ENCODE measurements at regions of chr1 and their contacts with region 1.

Region 1: DNA sequence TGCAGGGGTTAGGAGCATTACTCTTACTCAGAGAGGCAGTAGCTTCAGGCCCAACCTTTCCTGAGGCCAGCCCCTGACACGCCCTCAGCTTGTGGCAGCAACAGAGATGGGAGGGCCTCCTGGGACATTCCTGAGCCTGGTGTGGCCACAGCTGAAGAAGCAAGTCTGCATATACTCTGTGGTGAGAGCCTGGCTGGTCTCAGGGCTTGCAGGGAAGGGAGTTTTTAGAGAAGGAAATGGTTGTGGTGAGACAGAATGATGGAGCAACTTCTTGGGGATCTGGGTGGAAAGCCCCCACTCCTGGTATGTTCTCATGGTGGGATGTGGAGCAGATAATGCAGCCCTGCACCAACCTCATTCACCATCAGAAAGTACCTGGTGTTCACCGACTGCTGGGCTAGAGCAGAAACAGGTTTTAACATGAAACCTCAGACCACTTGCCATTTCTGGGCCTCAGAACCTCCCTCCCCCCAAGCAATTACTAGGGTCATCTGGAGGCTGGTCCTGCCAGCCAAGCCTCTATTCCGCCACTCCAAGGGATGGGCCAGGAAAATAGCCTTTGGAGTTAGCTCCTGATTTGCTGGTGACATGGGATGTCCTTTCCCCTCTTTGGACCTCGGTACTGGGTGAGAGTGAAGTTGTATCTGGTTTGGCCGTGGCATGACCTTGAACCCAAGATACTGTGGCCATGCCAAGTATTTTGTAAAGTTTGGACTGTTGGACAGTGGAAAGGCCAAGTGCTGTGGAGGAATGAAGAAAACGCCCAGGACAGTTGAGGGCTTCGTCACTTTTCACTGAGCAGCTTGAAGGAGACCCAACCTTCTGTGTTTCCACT is 28.1 kb upstream of the RNF19B start:
- DNase-seq: peak; percentile 70
- H3K4me3 ChIP-seq: no peak overlapping the region
- H3K27ac ChIP-seq: peak overlapping the region; percentile 54
- H3K4me1 ChIP-seq: peaks cover 28% of the 10 kb centered on the region
- CTCF ChIP-seq: no peak

Region 2: GRCh38 chr1:32958827-32959226 is 33.9 kb before region 1 on chr1:
- CTCF ChIA-PET with region 1: interaction called, 3 read pairs
- POLR2A ChIA-PET with region 1: interaction called, 10 read pairs
- intact Hi-C with region 1: loop called (anchors 5 kb)
- DNase-seq: no peak
- H3K4me3 ChIP-seq: peak overlapping the region; percentile 43
- H3K27ac ChIP-seq: peak overlapping the region; percentile 85
- H3K4me1 ChIP-seq: peaks cover 70% of the 10 kb centered on the region
- CTCF ChIP-seq: no peak

Region 3: DNA sequence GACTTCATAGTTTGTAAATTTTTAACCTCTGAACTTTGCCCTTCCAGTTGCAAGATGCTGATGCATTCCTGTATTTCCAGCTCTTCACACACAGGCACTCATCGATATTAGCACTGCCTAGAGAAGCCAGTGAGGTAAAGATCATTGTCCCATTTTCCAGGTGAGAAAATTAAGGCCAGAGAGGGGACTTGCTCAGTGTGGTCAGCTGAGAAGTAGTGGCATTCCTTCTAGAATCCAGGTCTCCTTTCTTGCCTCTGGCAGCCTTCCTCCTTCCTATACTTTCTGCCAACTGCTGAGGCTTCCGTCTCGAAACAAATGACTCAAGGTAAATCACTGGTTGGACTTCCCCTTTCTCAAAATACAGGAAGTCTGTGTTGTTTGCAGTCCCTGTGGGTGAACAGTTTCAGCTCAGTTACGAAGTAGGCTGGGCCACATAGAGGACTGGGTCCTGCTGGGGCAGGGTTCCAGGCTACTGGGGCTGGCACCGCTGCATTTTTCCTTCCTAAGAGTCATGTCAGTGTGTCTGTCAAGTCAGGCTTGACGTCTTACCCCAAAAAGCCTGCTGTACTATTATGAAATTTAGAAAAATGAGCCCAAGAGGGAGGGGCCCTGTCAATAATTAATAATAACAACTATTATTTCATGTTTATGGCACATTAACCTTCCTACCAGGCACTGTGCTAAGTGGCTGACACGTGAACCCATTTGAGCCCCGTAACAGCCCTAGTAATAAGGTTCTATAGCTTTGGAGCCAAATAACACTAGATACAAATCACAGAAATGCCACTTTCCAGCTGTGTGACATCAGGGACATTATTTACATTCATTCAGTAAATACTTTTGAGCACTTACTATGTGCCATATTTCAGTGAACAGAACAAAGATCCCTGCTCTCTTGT is 11.5 kb before region 1 on chr1:
- CTCF ChIA-PET with region 1: interaction called, 3 read pairs
- POLR2A ChIA-PET with region 1: interaction called, 15 read pairs
- intact Hi-C with region 1: no loop called
- DNase-seq: peak; percentile 90
- H3K4me3 ChIP-seq: peak overlapping the region; percentile 58
- H3K27ac ChIP-seq: peak overlapping the region; percentile 55
- H3K4me1 ChIP-seq: peaks cover 25% of the 10 kb centered on the region
- CTCF ChIP-seq: no peak